ENCODE measurements at regions of chr11 and their contacts with region 1.

Region 1: GRCh38 chr11:36746886-36747710 is 149.1 kb upstream of the RAG2 start:
- DNase-seq: peak; percentile 40 to 92 (median 71)
- ATAC-seq: peak; percentile 95 to 99 (median 97)
- H3K4me3 ChIP-seq: no peak overlapping the region
- H3K4me3 Mint-ChIP-seq: no peak overlapping the region
- H3K27ac ChIP-seq: no peak overlapping the region
- H3K27ac Mint-ChIP-seq: no peak overlapping the region
- H3K4me1 ChIP-seq: no peaks in the 10 kb centered on the region
- H3K4me1 Mint-ChIP-seq: peaks cover 6% of the 10 kb centered on the region in 3 donors
- H3K27me3 ChIP-seq: peaks cover 0 to 3% of the 10 kb centered on the region in 2 experiments
- H3K27me3 Mint-ChIP-seq: peaks cover 22 to 27% of the 10 kb centered on the region in 2 donors

Region 2: GRCh38 chr11:36702330-36703055 is 44.6 kb before region 1 on chr11:
- CTCF ChIA-PET with region 1: interaction called in 1 of 2 experiments, 12 read pairs
- POLR2A ChIA-PET with region 1: no interaction called
- DNase-seq: peak in 1 of 35 experiments; percentile 46
- ATAC-seq: no peak
- H3K4me3 ChIP-seq: no peak overlapping the region
- H3K4me3 Mint-ChIP-seq: no peak overlapping the region
- H3K27ac ChIP-seq: no peak overlapping the region
- H3K27ac Mint-ChIP-seq: no peak overlapping the region
- H3K4me1 ChIP-seq: no peaks in the 10 kb centered on the region
- H3K4me1 Mint-ChIP-seq: peaks cover 0 to 6% (median 0%) of the 10 kb centered on the region in 3 donors
- H3K27me3 ChIP-seq: no peaks in the 10 kb centered on the region
- H3K27me3 Mint-ChIP-seq: peaks cover 14 to 41% of the 10 kb centered on the region in 2 donors

Region 3: GRCh38 chr11:36790526-36790925 is 43.4 kb after region 1 on chr11:
- CTCF ChIA-PET with region 1: no interaction called
- POLR2A ChIA-PET with region 1: no interaction called
- DNase-seq: no peak
- ATAC-seq: no peak
- H3K4me3 ChIP-seq: no peak overlapping the region
- H3K4me3 Mint-ChIP-seq: no peak overlapping the region
- H3K27ac ChIP-seq: no peak overlapping the region
- H3K27ac Mint-ChIP-seq: no peak overlapping the region
- H3K4me1 ChIP-seq: no peaks in the 10 kb centered on the region
- H3K4me1 Mint-ChIP-seq: no peaks in the 10 kb centered on the region
- H3K27me3 ChIP-seq: peaks cover 0 to 2% of the 10 kb centered on the region in 2 experiments
- H3K27me3 Mint-ChIP-seq: peaks cover 3 to 22% of the 10 kb centered on the region in 2 donors

Measured in T-cell (primary cell).